HepG2 (cell line): ENCODE measurements at regions of chr11 and their contacts with region 1.

Region 1: GRCh38 chr11:102007567-102008437 is 39.4 kb upstream of the CFAP300 start:
- DNase-seq: peak; percentile 88
- ATAC-seq: peak; percentile 92
- H3K4me3 ChIP-seq: no peak overlapping the region; a peak in 1 of 6 replicates
- H3K27ac ChIP-seq: peak overlapping the region; percentile 51
- H3K4me1 ChIP-seq: peaks cover 35% of the 10 kb centered on the region
- H3K27me3 ChIP-seq: no peaks in the 10 kb centered on the region
- CTCF ChIP-seq: peak; percentile 68
- EP300 ChIP-seq: peak in 1 of 2 experiments; percentile 47; a peak in 1 of 4 replicates
- POLR2A ChIP-seq: no peak
- RAD21 ChIP-seq: peak; percentile 72

Region 2: DNA sequence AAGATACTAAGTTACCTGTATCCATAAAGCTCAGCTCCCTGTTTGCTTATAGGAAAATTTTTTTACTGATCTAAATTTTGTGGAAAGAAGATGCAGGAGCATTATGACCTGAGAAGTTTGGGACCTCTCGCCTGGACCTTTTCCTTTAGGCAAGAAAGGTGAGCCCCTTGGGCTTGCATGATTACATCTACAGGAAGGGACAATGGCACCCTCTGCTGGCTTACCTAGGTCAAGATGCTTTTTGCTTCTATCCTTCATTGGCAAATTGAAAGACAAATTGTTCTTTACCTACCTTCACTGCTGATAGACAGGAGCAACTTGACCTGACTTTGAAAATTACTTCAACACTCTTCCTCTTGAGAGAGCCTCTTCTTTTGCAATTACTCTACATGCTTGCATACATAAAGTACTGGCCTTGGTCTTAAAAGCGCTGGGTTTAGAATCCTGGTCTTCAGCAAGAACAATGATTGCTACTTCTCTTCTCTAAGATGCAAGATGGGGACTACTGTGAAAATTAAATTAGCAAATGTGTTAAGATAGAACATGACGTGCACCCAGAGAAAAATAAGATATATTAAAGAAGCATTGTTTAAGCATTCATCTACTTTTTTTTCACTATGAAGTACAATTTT is 571.2 kb before region 1 on chr11:
- CTCF ChIA-PET with region 1: no interaction called
- POLR2A ChIA-PET with region 1: no interaction called
- in situ Hi-C with region 1: loop called (anchors 25 kb)
- intact Hi-C with region 1: no loop called
- DNase-seq: peak; percentile 18
- ATAC-seq: peak; percentile 66
- H3K4me3 ChIP-seq: no peak overlapping the region
- H3K27ac ChIP-seq: no peak overlapping the region
- H3K4me1 ChIP-seq: no peaks in the 10 kb centered on the region
- H3K27me3 ChIP-seq: no peaks in the 10 kb centered on the region
- CTCF ChIP-seq: peak; percentile 73
- EP300 ChIP-seq: no peak
- POLR2A ChIP-seq: no peak
- RAD21 ChIP-seq: 0 out of 2 replicates have a peak, but pooled peaks have one; percentile 13

Region 3: DNA sequence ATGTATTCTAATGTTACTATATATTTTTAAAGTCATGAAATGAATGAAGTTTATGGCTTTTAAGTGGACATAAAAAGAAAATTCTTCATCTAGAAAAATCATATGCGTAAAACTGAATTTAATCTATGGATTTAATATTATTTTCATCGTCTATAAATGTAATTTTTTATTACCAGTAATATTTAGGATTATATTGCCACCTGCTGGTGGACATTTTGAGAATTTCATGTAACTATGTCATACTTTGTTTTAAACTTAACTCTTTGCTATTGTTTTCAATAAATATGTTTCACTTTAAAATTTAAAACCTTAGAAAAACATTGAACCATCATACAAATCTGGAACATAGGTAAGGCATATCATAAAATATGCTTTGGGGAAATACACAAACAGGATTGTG is 159.5 kb before region 1 on chr11:
- CTCF ChIA-PET with region 1: interaction called, 7 read pairs
- POLR2A ChIA-PET with region 1: no interaction called
- in situ Hi-C with region 1: no loop called
- intact Hi-C with region 1: loop called (anchors 1 kb)
- DNase-seq: peak; percentile 20
- ATAC-seq: no peak
- H3K4me3 ChIP-seq: no peak overlapping the region
- H3K27ac ChIP-seq: no peak overlapping the region
- H3K4me1 ChIP-seq: peaks cover 5% of the 10 kb centered on the region; the same call in 1 of the 2 replicates
- H3K27me3 ChIP-seq: no peaks in the 10 kb centered on the region
- CTCF ChIP-seq: no peak
- EP300 ChIP-seq: no peak
- POLR2A ChIP-seq: no peak
- RAD21 ChIP-seq: no peak

Region 4: GRCh38 chr11:101866619-101867491 is 140.9 kb before region 1 on chr11:
- CTCF ChIA-PET with region 1: interaction called, 42 read pairs
- POLR2A ChIA-PET with region 1: interaction called, 5 read pairs
- in situ Hi-C with region 1: loop called (anchors 5 kb)
- intact Hi-C with region 1: loop called (anchors 1 kb)
- DNase-seq: peak; percentile 93
- ATAC-seq: peak; percentile 93
- H3K4me3 ChIP-seq: no peak overlapping the region; a peak in 1 of 6 replicates
- H3K27ac ChIP-seq: peak overlapping the region; percentile 56
- H3K4me1 ChIP-seq: peaks cover 58% of the 10 kb centered on the region
- H3K27me3 ChIP-seq: no peaks in the 10 kb centered on the region
- CTCF ChIP-seq: no peak
- EP300 ChIP-seq: peak in 1 of 2 experiments; percentile 91; a peak in 2 of 4 replicates
- POLR2A ChIP-seq: no peak
- RAD21 ChIP-seq: no peak

Region 5: DNA sequence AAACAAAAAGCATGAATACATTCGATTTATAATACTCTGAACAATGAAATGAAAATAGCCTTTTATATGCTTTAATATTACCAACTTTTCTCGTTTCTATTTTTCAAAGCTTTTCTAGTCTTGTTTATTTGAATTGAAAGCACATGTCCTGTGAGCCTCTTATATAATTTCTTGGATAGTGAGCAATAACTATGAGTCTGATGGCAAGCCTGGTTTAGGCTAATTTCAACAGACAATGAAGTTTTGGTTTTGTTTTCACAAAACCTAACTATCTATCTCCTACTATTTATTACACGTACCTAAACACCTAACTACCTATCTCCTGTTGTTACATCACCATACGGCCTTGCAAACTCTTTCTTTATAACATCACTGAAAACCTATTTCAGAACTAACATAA is 122.2 kb before region 1 on chr11:
- CTCF ChIA-PET with region 1: no interaction called
- POLR2A ChIA-PET with region 1: no interaction called
- in situ Hi-C with region 1: no loop called
- intact Hi-C with region 1: no loop called
- DNase-seq: no peak
- ATAC-seq: no peak
- H3K4me3 ChIP-seq: no peak overlapping the region
- H3K27ac ChIP-seq: no peak overlapping the region
- H3K4me1 ChIP-seq: no peaks in the 10 kb centered on the region
- H3K27me3 ChIP-seq: 0 out of 5 replicates have a peak, but pooled peaks cover 0 to 6% of the 10 kb centered on the region in 2 experiments
- CTCF ChIP-seq: no peak
- EP300 ChIP-seq: no peak
- POLR2A ChIP-seq: no peak
- RAD21 ChIP-seq: no peak

Region 6: GRCh38 chr11:101929294-101929916 is 78.4 kb before region 1 on chr11:
- CTCF ChIA-PET with region 1: interaction called, 15 read pairs
- POLR2A ChIA-PET with region 1: no interaction called
- in situ Hi-C with region 1: loop called (anchors 10 kb)
- intact Hi-C with region 1: loop called (anchors 1 kb)
- DNase-seq: peak; percentile 58
- ATAC-seq: peak; percentile 99
- H3K4me3 ChIP-seq: no peak overlapping the region; a peak in 1 of 6 replicates
- H3K27ac ChIP-seq: no peak overlapping the region
- H3K4me1 ChIP-seq: peaks cover 10% of the 10 kb centered on the region
- H3K27me3 ChIP-seq: no peaks in the 10 kb centered on the region
- CTCF ChIP-seq: peak; percentile 66
- EP300 ChIP-seq: no peak
- POLR2A ChIP-seq: no peak
- RAD21 ChIP-seq: peak; percentile 51

Region 7: GRCh38 chr11:102109896-102110760 is 102.3 kb after region 1 on chr11 and contains the start of gene YAP1:
- CTCF ChIA-PET with region 1: no interaction called
- POLR2A ChIA-PET with region 1: interaction called, 8 read pairs
- in situ Hi-C with region 1: no loop called
- intact Hi-C with region 1: loop called (anchors 5 kb)
- DNase-seq: peak; percentile 83
- ATAC-seq: peak; percentile 79
- H3K4me3 ChIP-seq: peak within 1 kb of the TSS; percentile 88 to 97 (median 93)
- H3K27ac ChIP-seq: peak within 1 kb of the TSS; percentile 98
- H3K4me1 ChIP-seq: peaks cover 32% of the 10 kb centered on the region
- H3K27me3 ChIP-seq: no peaks in the 10 kb centered on the region; a peak in 1 of 5 replicates
- CTCF ChIP-seq: peak; percentile 20
- EP300 ChIP-seq: peak in 1 of 2 experiments; percentile 66; a peak in 2 of 4 replicates
- POLR2A ChIP-seq: peak; percentile 54 to 71
- RAD21 ChIP-seq: peak; percentile 81; the same call in 1 of the 2 replicates
- total RNA-seq, gene YAP1: 91.0 and 108 TPM in 2 replicates